ENCODE measurements at regions of chr9 and their contacts with region 1.

Region 1: DNA sequence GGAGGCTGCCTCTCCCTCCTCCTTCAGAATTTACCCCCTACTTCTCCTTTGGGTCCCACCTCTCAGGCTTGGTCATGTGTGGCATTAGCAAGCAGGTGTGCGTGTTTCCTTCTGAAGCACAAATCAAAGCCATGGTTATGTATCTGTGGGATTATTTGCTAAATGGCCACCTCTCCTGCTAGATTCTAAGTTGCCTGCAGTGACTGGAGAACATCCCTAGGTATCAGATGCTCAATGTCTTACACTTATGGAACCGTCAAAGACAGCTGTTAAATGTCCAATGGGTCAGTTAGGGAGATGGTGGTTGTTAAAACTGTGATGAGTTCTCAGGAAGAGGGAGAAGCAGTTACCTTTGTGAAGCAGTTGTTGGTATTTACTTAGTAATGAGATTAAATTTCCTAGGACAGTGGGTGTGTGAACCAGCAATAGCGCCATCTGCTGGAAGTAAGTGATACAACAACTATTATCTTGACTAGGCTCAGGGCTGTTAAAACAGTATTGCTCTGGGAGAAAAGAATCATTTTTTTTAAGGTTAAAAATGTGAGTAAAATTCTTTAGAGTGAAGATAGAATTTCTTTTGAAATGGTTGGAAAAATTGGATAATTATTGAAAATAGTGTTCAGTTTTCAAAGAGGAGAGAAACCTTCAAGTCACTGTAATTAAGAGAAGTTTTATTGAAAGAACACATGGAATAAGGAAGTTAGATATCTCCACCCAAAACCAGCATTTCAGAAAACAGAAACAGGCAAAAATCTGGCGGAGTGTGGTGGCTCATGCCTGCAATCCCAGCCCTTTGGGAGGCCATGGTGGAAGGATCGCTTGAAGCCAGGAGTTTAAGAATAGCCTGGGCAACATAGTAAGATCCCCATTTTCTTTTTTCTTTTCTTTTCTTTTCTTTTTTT is 71.3 kb downstream of the TMC1 start:
- DNase-seq: peak; percentile 79
- H3K4me3 ChIP-seq: no peak overlapping the region
- H3K27ac ChIP-seq: no peak overlapping the region
- H3K4me1 ChIP-seq: no peaks in the 10 kb centered on the region
- H3K27me3 ChIP-seq: no peaks in the 10 kb centered on the region
- CTCF ChIP-seq: peak; percentile 47 to 57
- POLR2A ChIP-seq: no peak

Region 2: GRCh38 chr9:72280913-72281500 is 311.7 kb before region 1 on chr9:
- CTCF ChIA-PET with region 1: interaction called, 32 read pairs
- POLR2A ChIA-PET with region 1: no interaction called
- dilution Hi-C with region 1: no loop called
- intact Hi-C with region 1: loop called (anchors 1 kb)
- DNase-seq: peak; percentile 69
- H3K4me3 ChIP-seq: no peak overlapping the region
- H3K27ac ChIP-seq: no peak overlapping the region
- H3K4me1 ChIP-seq: no peaks in the 10 kb centered on the region
- H3K27me3 ChIP-seq: peaks cover 4 to 5% of the 10 kb centered on the region in 2 experiments
- CTCF ChIP-seq: peak; percentile 85 to 92
- POLR2A ChIP-seq: no peak

Region 3: GRCh38 chr9:72443855-72444254 is 148.9 kb before region 1 on chr9:
- CTCF ChIA-PET with region 1: no interaction called
- POLR2A ChIA-PET with region 1: no interaction called
- dilution Hi-C with region 1: no loop called
- intact Hi-C with region 1: loop called (anchors 2 kb)
- DNase-seq: no peak
- H3K4me3 ChIP-seq: no peak overlapping the region
- H3K27ac ChIP-seq: no peak overlapping the region
- H3K4me1 ChIP-seq: peaks cover 26% of the 10 kb centered on the region
- H3K27me3 ChIP-seq: no peaks in the 10 kb centered on the region
- CTCF ChIP-seq: no peak
- POLR2A ChIP-seq: no peak

Region 4: GRCh38 chr9:72478966-72479365 is 113.8 kb before region 1 on chr9:
- CTCF ChIA-PET with region 1: interaction called, 4 read pairs
- POLR2A ChIA-PET with region 1: no interaction called
- dilution Hi-C with region 1: no loop called
- intact Hi-C with region 1: loop called (anchors 2 kb)
- DNase-seq: peak; percentile 87
- H3K4me3 ChIP-seq: peak overlapping the region in 1 of 3 experiments; percentile 42
- H3K27ac ChIP-seq: peak overlapping the region; percentile 80
- H3K4me1 ChIP-seq: peaks cover 42% of the 10 kb centered on the region
- H3K27me3 ChIP-seq: no peaks in the 10 kb centered on the region
- CTCF ChIP-seq: no peak
- POLR2A ChIP-seq: no peak

Region 5: GRCh38 chr9:72577212-72577753 is 15.5 kb before region 1 on chr9:
- CTCF ChIA-PET with region 1: interaction called, 20 read pairs
- POLR2A ChIA-PET with region 1: interaction called, 6 read pairs
- dilution Hi-C with region 1: no loop called
- intact Hi-C with region 1: no loop called
- DNase-seq: peak; percentile 90
- H3K4me3 ChIP-seq: peak overlapping the region in 1 of 3 experiments; percentile 7
- H3K27ac ChIP-seq: peak overlapping the region; percentile 65
- H3K4me1 ChIP-seq: peaks cover 51% of the 10 kb centered on the region
- H3K27me3 ChIP-seq: no peaks in the 10 kb centered on the region
- CTCF ChIP-seq: no peak
- POLR2A ChIP-seq: no peak

Region 6: GRCh38 chr9:72734631-72735030 is 141.9 kb after region 1 on chr9:
- CTCF ChIA-PET with region 1: no interaction called
- POLR2A ChIA-PET with region 1: no interaction called
- dilution Hi-C with region 1: no loop called
- intact Hi-C with region 1: no loop called
- DNase-seq: no peak
- H3K4me3 ChIP-seq: no peak overlapping the region
- H3K27ac ChIP-seq: no peak overlapping the region
- H3K4me1 ChIP-seq: no peaks in the 10 kb centered on the region
- H3K27me3 ChIP-seq: peaks cover 0 to 2% of the 10 kb centered on the region in 2 experiments
- CTCF ChIP-seq: no peak
- POLR2A ChIP-seq: no peak

Region 7: GRCh38 chr9:72827950-72828731 is 235.4 kb after region 1 on chr9:
- CTCF ChIA-PET with region 1: no interaction called
- POLR2A ChIA-PET with region 1: no interaction called
- dilution Hi-C with region 1: no loop called
- intact Hi-C with region 1: loop called (anchors 5 kb)
- DNase-seq: peak; percentile 42
- H3K4me3 ChIP-seq: no peak overlapping the region
- H3K27ac ChIP-seq: no peak overlapping the region
- H3K4me1 ChIP-seq: peaks cover 4% of the 10 kb centered on the region
- H3K27me3 ChIP-seq: no peaks in the 10 kb centered on the region
- CTCF ChIP-seq: no peak
- POLR2A ChIP-seq: no peak

Measured in endothelial cell of umbilical vein (primary cell).